ENCODE measurements at regions of chr12 and their contacts with region 1.

Region 1: GRCh38 chr12:51083126-51083833 is at the start of gene CSRNP2:
- H3K4me3 ChIP-seq: peak within 1 kb of the TSS; percentile 91
- H3K27ac ChIP-seq: peak within 1 kb of the TSS; percentile 63
- H3K4me1 ChIP-seq: peaks cover 5% of the 10 kb centered on the region; the same call in 1 of the 2 replicates
- CTCF ChIP-seq: no peak

Region 2: GRCh38 chr12:50960130-50960529 is 123.2 kb before region 1 on chr12:
- CTCF ChIA-PET with region 1: no interaction called
- POLR2A ChIA-PET with region 1: no interaction called
- H3K4me3 ChIP-seq: no peak overlapping the region
- H3K27ac ChIP-seq: no peak overlapping the region
- H3K4me1 ChIP-seq: no peaks in the 10 kb centered on the region
- CTCF ChIP-seq: no peak

Region 3: GRCh38 chr12:51047655-51048540 is 35.4 kb before region 1 on chr12 and contains the start of gene LETMD1:
- CTCF ChIA-PET with region 1: no interaction called
- POLR2A ChIA-PET with region 1: interaction called, 10 read pairs
- H3K4me3 ChIP-seq: peak within 1 kb of the TSS; percentile 80
- H3K27ac ChIP-seq: peak within 1 kb of the TSS; percentile 65
- H3K4me1 ChIP-seq: 0 out of 2 replicates have a peak, but pooled peaks cover 3% of the 10 kb centered on the region
- CTCF ChIP-seq: peak; percentile 96

Region 4: GRCh38 chr12:51172515-51173431 is 89.5 kb after region 1 on chr12 and contains the start of gene TFCP2:
- CTCF ChIA-PET with region 1: no interaction called
- POLR2A ChIA-PET with region 1: interaction called, 14 read pairs
- H3K4me3 ChIP-seq: peak within 1 kb of the TSS; percentile 99
- H3K27ac ChIP-seq: peak within 1 kb of the TSS; percentile 85
- H3K4me1 ChIP-seq: no peaks in the 10 kb centered on the region
- CTCF ChIP-seq: 0 out of 2 replicates have a peak, but pooled peaks have one; percentile 20

Region 5: DNA sequence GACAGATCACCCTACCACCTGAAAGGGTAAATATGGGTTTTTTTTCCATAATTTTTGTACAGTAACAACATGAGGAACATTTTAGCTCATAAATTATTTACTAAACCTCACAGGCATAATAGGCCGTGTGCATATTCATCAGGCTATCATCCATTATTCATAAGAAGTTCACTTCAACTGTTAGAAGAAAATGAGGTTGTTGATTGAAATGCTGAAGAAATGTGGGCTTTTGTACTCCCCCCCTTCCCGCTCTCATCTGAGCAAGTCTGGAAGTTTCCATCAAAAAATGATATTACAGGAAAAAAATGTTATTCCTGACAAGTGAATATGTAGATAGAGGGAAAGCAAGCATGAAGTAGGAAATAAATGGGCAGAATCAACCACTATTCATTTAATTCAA is 142.5 kb after region 1 on chr12:
- CTCF ChIA-PET with region 1: no interaction called
- POLR2A ChIA-PET with region 1: interaction called, 10 read pairs
- H3K4me3 ChIP-seq: no peak overlapping the region
- H3K27ac ChIP-seq: no peak overlapping the region
- H3K4me1 ChIP-seq: peaks cover 5% of the 10 kb centered on the region
- CTCF ChIP-seq: no peak

Region 6: GRCh38 chr12:51341259-51342007 is 258.2 kb after region 1 on chr12:
- CTCF ChIA-PET with region 1: interaction called, 5 read pairs
- POLR2A ChIA-PET with region 1: interaction called, 10 read pairs
- H3K4me3 ChIP-seq: no peak overlapping the region
- H3K27ac ChIP-seq: no peak overlapping the region
- H3K4me1 ChIP-seq: no peaks in the 10 kb centered on the region
- CTCF ChIP-seq: peak; percentile 81